Dendritic cell treated with granulocyte-macrophage colony-stimulating factor and Interleukin-4, amounts not matched to agents 40 ng/mL and 50 ng/mL, for 4 days (primary cell): ENCODE measurements at regions of chr20 and their contacts with region 1.

Region 1: DNA sequence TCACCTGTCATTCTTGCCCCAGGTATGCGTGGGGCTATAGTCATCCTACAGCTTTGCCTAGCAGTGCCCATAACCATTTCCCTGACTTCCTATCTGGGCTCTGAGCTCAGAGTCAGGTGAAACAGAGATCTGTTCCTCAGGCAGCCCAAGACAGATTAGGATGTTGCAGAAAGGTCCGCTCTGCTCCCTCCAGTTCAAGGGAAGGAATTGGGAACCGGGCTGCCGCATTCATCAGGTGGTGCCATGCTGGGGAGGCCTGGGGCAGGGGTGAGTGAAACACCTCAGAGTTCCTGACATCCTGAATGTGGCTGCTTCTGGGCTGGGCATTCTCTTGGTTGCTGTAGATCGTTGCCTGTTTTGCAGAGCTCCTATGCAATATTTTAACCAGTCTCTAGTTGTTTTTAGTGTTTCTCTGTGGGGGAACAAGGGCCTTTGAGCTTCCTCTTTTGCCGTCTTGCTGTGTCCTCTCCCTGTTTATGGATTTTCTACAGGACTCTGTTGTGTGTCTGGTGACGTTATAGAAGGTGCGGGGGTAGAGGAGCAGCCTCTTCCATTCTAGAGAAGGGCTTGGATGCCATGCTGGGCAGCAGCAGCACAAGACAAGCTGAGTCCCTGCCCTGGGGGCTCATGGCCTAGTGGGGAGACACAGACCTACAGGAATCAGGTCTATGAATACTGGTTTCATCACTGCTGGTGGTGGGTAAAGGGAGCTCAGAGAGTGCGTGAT is 9.2 kb downstream of the ENTPD6 start:
- H3K4me3 Mint-ChIP-seq: peak overlapping the region; percentile 68
- H3K27ac Mint-ChIP-seq: peak overlapping the region; percentile 95
- H3K4me1 Mint-ChIP-seq: peaks cover 74% of the 10 kb centered on the region
- H3K27me3 Mint-ChIP-seq: no peaks in the 10 kb centered on the region

Region 2: DNA sequence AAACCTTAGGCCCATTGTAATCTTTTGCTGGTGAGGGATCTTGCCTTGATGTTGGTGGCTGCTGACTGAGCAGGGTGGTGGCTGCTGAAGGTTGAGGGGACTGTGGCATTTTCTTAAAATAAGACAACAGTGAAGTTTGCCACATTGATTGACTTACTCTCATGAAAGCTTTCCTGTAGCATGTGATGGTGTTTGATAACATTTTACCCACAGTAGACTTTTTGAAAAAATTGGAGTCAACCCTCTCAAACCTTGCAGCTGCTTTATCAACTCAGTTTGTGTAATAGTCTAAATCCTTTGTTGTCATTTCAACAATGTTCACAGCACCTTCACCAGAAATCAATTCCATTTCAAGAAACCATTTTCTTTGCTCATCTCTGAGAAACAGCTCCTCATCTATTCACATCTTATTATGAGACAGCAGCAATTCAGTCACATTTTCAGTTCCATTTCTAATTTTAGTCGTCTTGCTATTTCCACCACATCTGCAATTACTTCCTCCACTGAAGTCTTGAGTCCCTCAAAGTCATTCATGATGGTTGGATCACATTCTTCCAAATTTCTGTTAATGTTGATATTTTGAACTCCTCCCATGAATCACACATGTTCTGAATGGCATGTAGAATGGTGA is 1673.7 kb before region 1 on chr20:
- intact Hi-C with region 1: no loop called
- H3K4me3 Mint-ChIP-seq: no peak overlapping the region
- H3K27ac Mint-ChIP-seq: no peak overlapping the region
- H3K4me1 Mint-ChIP-seq: peaks cover 8% of the 10 kb centered on the region
- H3K27me3 Mint-ChIP-seq: peaks cover 6% of the 10 kb centered on the region

Region 3: GRCh38 chr20:24577271-24577909 is 627.3 kb before region 1 on chr20:
- intact Hi-C with region 1: no loop called
- H3K4me3 Mint-ChIP-seq: no peak overlapping the region
- H3K27ac Mint-ChIP-seq: no peak overlapping the region
- H3K4me1 Mint-ChIP-seq: no peaks in the 10 kb centered on the region
- H3K27me3 Mint-ChIP-seq: peaks cover 2% of the 10 kb centered on the region

Region 4: GRCh38 chr20:25310268-25310920 is 105.7 kb after region 1 on chr20:
- intact Hi-C with region 1: loop called (anchors 10 kb)
- H3K4me3 Mint-ChIP-seq: peak overlapping the region; percentile 77
- H3K27ac Mint-ChIP-seq: peak overlapping the region; percentile 96
- H3K4me1 Mint-ChIP-seq: peaks cover 69% of the 10 kb centered on the region
- H3K27me3 Mint-ChIP-seq: no peaks in the 10 kb centered on the region

Region 5: GRCh38 chr20:25399037-25399430 is 194.3 kb after region 1 on chr20:
- intact Hi-C with region 1: loop called (anchors 5 kb)
- H3K4me3 Mint-ChIP-seq: no peak overlapping the region
- H3K27ac Mint-ChIP-seq: no peak overlapping the region
- H3K4me1 Mint-ChIP-seq: peaks cover 21% of the 10 kb centered on the region
- H3K27me3 Mint-ChIP-seq: peaks cover 2% of the 10 kb centered on the region

Region 6: DNA sequence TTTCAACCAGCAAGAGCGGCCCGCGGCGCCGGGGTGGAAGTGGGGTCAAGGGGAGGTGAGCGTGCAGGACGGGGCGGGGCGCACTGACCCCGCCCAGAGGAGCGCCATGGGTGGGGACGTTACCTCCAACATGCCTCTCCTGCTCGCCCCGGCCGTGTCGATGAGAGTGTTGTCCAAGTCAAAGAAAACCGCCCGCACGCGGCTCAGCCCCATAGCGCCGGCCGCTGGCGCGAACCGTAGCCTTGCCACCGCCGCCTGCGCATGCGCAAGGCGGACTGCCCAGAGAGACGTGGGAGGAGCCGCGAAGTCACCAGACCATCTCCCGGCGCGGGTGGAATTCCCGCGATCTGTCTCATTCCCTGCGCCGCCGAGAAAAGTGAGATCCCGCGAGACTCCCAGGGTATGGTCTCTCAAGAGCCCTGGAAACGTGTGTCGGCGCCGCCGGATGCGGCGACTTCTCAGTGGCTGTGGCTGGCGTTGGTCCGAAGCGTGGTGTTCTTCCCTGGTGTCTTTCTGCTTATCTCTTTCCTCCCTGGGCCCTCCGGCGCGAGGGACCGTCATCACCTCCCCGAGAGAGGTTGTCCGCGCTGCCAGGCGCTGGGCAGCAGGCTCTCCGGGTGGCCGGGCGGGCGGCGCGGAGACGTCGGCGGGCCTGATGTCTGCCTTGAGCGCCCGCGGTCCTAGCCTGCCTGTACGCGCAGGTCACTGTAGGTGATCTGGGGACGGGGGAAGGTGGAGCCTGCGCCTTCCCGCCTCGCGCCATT is 419.2 kb after region 1 on chr20 and contains the start of gene NANP:
- intact Hi-C with region 1: loop called (anchors 5 kb)
- H3K4me3 Mint-ChIP-seq: peak within 1 kb of the TSS; percentile 83
- H3K27ac Mint-ChIP-seq: peak within 1 kb of the TSS; percentile 92
- H3K4me1 Mint-ChIP-seq: peaks cover 39% of the 10 kb centered on the region
- H3K27me3 Mint-ChIP-seq: no peaks in the 10 kb centered on the region